ENCODE measurements at regions of chr1 and their contacts with region 1.

Region 1: DNA sequence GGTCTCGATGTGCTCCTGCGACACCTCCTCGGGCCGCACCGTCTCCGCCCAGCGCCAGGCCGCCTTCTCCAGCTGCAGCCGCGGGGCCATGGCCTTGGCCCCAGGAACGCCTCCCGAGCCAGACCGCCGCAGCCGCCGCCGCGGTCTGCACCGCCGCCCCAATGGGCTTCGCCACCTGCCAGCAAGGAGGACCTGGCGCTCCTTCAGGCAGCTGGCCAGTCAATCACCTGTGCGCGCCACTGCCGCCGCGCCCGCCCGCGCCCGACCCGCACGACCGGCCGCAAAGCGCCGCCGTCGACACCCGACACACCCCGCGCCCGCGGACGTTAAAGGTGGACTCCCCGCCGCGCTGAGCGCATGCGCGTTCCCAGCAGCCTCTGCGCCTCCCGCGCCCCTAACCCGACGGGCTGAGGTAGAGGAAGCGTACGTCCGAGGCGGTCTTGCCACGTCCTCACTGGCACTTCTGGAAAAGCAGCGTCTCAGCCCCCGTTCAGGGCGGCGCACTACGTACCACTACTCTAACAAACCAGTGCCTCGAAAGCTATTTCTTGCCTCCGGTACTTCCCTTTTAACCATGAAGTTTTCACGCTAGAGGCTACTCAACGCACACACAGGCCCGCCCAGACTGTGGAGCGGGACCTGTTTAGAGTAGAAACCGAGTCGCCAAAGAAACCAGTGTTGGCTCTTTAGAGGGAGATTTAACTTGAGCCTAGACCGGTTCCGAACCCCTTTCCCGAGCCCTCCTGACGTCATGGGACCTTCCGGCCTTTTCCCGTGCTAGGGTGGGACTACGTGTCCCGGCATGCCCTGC is at the start of gene USP48:
- DNase-seq: peak; percentile 98
- H3K4me3 Mint-ChIP-seq: peak within 1 kb of the TSS; percentile 94
- H3K27ac Mint-ChIP-seq: peak within 1 kb of the TSS; percentile 97
- H3K4me1 Mint-ChIP-seq: peaks cover 21% of the 10 kb centered on the region
- H3K27me3 Mint-ChIP-seq: no peaks in the 10 kb centered on the region
- total RNA-seq, gene USP48: 77.2 to 91.1 TPM

Region 2: GRCh38 chr1:21764615-21765423 is 18.3 kb before region 1 on chr1:
- CTCF ChIA-PET with region 1: no interaction called
- POLR2A ChIA-PET with region 1: interaction called, 11 read pairs
- intact Hi-C with region 1: loop called (anchors 1 kb)
- DNase-seq: peak; percentile 64
- H3K4me3 Mint-ChIP-seq: no peak overlapping the region
- H3K27ac Mint-ChIP-seq: no peak overlapping the region
- H3K4me1 Mint-ChIP-seq: peaks cover 63% of the 10 kb centered on the region
- H3K27me3 Mint-ChIP-seq: no peaks in the 10 kb centered on the region

Region 3: GRCh38 chr1:22841860-22842281 is 1058.8 kb after region 1 on chr1:
- CTCF ChIA-PET with region 1: no interaction called
- POLR2A ChIA-PET with region 1: no interaction called
- intact Hi-C with region 1: no loop called
- DNase-seq: no peak
- H3K4me3 Mint-ChIP-seq: no peak overlapping the region
- H3K27ac Mint-ChIP-seq: no peak overlapping the region
- H3K4me1 Mint-ChIP-seq: no peaks in the 10 kb centered on the region
- H3K27me3 Mint-ChIP-seq: peaks cover 27% of the 10 kb centered on the region

Measured in activated CD4-positive, alpha-beta memory T cell treated with anti-CD3 and anti-CD28 coated beads for 36 hours (primary cell).